ENCODE measurements at regions of chr17 and their contacts with region 1.

Region 1: DNA sequence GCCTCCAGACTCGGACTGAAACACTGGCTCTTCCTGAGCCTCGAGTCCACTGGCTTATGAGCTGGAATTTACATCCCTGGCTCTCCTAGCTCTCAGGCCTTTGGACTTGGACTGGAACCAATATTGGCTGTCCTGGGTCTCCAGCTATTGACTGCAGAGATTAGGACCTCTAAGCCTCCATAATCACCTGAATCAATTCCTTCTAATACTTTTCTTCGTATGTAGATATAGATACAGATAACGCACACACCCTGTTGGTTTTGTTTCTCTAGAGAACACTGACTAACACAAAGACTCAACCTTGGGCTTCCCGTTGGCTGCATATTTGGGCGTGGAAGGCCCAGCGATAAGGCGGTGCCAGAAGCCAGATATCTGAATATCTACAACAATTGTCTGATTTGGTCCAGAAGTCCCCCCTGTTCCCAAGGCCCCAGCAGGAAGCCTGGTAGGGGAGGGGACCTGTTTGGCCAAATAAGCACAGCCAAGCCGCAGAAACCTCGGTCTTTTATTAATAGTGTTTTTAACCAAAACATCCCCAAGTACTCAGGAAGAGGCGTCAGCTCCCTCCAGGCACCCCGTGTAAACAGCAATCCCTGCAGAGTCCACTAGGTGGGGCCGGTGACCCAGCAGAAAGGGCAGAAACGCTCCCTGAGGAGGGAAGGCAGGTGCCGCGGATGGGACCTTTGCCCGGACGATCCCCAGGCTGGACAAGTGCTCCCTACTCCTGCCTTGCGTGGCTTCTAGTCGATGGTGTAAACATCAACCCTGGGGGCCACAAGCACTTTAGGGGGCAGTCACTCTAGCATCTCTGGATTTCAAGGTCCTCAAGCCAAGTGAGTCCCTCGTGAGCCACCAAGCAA is 57.0 kb downstream of the ABR start:
- DNase-seq: peak; percentile 91
- ATAC-seq: peak; percentile 90
- H3K4me3 Mint-ChIP-seq: no peak overlapping the region
- H3K27ac Mint-ChIP-seq: no peak overlapping the region
- H3K4me1 Mint-ChIP-seq: peaks cover 8% of the 10 kb centered on the region
- H3K27me3 Mint-ChIP-seq: peaks cover 2% of the 10 kb centered on the region
- CTCF ChIP-seq: peak; percentile 66

Region 2: DNA sequence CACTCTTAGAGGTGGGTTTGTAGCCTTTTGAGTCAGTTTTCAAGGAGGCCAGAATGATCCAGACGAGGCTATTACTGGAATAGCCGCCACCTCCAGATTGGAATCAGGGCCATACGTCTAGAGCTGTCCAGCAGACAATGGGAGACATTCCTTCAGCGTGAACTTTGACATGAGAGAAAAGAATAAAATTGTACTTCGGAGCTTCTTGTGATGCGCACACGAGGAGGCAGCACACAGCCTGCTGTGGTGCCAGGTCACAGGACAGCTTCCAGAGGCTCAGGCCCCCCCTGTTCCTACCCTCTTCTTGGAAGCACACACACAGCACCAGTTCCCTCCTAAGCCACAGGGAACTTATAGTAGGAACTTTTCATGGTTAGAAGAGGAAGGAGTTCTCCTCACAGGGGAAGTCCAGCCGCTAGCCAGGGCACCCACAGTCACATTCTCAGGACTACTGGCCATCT is 489.1 kb before region 1 on chr17:
- CTCF ChIA-PET with region 1: no interaction called
- POLR2A ChIA-PET with region 1: no interaction called
- DNase-seq: no peak
- ATAC-seq: no peak
- H3K4me3 Mint-ChIP-seq: no peak overlapping the region
- H3K27ac Mint-ChIP-seq: no peak overlapping the region
- H3K4me1 Mint-ChIP-seq: no peaks in the 10 kb centered on the region
- H3K27me3 Mint-ChIP-seq: no peaks in the 10 kb centered on the region
- CTCF ChIP-seq: no peak

Region 3: DNA sequence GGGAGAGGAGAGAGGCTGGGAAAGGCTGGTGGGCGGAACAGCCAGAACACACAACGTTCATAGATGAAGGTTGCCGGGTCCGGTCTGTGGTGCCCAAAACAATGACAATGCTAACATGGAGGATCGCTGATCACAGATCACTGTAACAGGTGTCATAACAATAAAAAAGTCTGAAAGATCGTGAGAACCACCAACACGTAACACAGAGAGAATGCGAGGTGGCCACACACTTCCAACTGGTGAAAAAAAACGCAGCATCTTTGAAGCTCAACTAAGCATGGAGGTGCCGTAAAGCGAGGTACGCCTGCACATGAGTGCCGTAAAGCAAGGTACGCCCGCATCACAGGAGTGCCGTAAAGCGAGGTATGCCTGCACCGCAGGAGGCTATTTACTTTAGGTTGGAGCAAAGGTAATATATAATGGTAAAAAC is 14.7 kb after region 1 on chr17:
- CTCF ChIA-PET with region 1: interaction called, 134 read pairs
- POLR2A ChIA-PET with region 1: no interaction called
- DNase-seq: peak; percentile 55
- ATAC-seq: peak; percentile 60; the same call in 1 of the 2 replicates
- H3K4me3 Mint-ChIP-seq: no peak overlapping the region
- H3K27ac Mint-ChIP-seq: peak overlapping the region; percentile 71
- H3K4me1 Mint-ChIP-seq: peaks cover 18% of the 10 kb centered on the region
- H3K27me3 Mint-ChIP-seq: no peaks in the 10 kb centered on the region
- CTCF ChIP-seq: no peak

Region 4: DNA sequence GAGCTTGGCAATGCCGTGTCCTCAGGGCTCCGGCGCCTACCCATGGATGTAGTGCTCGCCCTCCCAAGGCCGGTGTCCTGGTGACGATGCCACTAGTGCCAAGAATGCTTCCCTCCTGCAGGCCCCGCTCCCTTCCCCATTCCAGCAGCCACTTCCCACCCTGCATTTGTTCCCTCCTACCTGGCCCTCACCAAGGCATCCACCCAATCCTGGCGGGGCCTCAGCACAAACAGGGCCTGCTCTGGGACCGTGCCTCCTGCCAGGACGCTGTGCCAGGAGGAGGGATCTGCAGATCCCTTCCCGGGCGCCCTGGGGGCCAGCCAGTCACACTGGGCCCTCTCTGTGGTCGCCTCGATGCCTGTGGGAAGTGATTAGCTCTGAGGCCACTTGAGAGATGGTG is 31.9 kb after region 1 on chr17:
- CTCF ChIA-PET with region 1: interaction called, 134 read pairs
- POLR2A ChIA-PET with region 1: no interaction called
- DNase-seq: no peak
- ATAC-seq: no peak
- H3K4me3 Mint-ChIP-seq: no peak overlapping the region
- H3K27ac Mint-ChIP-seq: no peak overlapping the region
- H3K4me1 Mint-ChIP-seq: no peaks in the 10 kb centered on the region
- H3K27me3 Mint-ChIP-seq: no peaks in the 10 kb centered on the region
- CTCF ChIP-seq: no peak

Region 5: GRCh38 chr17:1186923-1187771 is 64.4 kb after region 1 on chr17:
- CTCF ChIA-PET with region 1: interaction called, 99 read pairs
- POLR2A ChIA-PET with region 1: interaction called, 4 read pairs
- DNase-seq: peak; percentile 90
- ATAC-seq: peak; percentile 94
- H3K4me3 Mint-ChIP-seq: peak overlapping the region; percentile 30; the same call in 1 of the 2 replicates
- H3K27ac Mint-ChIP-seq: no peak overlapping the region; the same call in 1 of the 2 replicates
- H3K4me1 Mint-ChIP-seq: peaks cover 14% of the 10 kb centered on the region
- H3K27me3 Mint-ChIP-seq: peaks cover 24% of the 10 kb centered on the region
- CTCF ChIP-seq: peak; percentile 92

Region 6: DNA sequence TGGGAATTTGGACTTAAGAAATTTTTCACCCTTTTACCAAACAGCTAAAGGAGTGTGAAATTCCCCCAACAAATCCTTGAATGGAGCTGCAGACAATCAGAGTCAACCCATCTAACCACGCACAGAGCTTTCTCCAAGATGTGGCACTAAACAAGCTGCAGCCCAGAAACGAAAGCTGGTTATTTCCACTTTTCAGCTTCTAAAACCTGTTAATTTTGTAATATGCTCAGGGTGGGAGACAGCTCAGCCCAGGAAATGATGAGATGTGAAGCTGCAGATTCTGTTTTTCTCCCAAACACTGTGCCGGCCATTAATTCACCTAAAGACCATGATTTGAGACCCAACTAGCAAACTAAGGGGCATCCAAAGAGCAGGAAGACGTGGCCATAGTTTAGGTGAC is 90.2 kb after region 1 on chr17:
- CTCF ChIA-PET with region 1: no interaction called
- POLR2A ChIA-PET with region 1: no interaction called
- DNase-seq: no peak
- ATAC-seq: no peak
- H3K4me3 Mint-ChIP-seq: no peak overlapping the region
- H3K27ac Mint-ChIP-seq: no peak overlapping the region
- H3K4me1 Mint-ChIP-seq: peaks cover 3% of the 10 kb centered on the region; the same call in 1 of the 2 replicates
- H3K27me3 Mint-ChIP-seq: no peaks in the 10 kb centered on the region
- CTCF ChIP-seq: no peak

Region 7: GRCh38 chr17:1229432-1229899 is 106.7 kb after region 1 on chr17:
- CTCF ChIA-PET with region 1: interaction called, 10 read pairs
- POLR2A ChIA-PET with region 1: interaction called, 3 read pairs
- DNase-seq: peak; percentile 31
- ATAC-seq: peak; percentile 49
- H3K4me3 Mint-ChIP-seq: peak overlapping the region; percentile 34
- H3K27ac Mint-ChIP-seq: no peak overlapping the region
- H3K4me1 Mint-ChIP-seq: peaks cover 8% of the 10 kb centered on the region
- H3K27me3 Mint-ChIP-seq: peaks cover 77% of the 10 kb centered on the region
- CTCF ChIP-seq: no peak

Region 8: GRCh38 chr17:1294157-1294717 is 171.5 kb after region 1 on chr17:
- CTCF ChIA-PET with region 1: no interaction called
- POLR2A ChIA-PET with region 1: no interaction called
- DNase-seq: no peak
- ATAC-seq: no peak
- H3K4me3 Mint-ChIP-seq: no peak overlapping the region
- H3K27ac Mint-ChIP-seq: no peak overlapping the region
- H3K4me1 Mint-ChIP-seq: no peaks in the 10 kb centered on the region
- H3K27me3 Mint-ChIP-seq: peaks cover 15% of the 10 kb centered on the region; the same call in 1 of the 2 replicates
- CTCF ChIP-seq: no peak

Measured in WTC11 (cell line).